Right ventricle myocardium superior (tissue), 1 donor: ENCODE measurements at regions of chr19 and their contacts with region 1.

Region 1: DNA sequence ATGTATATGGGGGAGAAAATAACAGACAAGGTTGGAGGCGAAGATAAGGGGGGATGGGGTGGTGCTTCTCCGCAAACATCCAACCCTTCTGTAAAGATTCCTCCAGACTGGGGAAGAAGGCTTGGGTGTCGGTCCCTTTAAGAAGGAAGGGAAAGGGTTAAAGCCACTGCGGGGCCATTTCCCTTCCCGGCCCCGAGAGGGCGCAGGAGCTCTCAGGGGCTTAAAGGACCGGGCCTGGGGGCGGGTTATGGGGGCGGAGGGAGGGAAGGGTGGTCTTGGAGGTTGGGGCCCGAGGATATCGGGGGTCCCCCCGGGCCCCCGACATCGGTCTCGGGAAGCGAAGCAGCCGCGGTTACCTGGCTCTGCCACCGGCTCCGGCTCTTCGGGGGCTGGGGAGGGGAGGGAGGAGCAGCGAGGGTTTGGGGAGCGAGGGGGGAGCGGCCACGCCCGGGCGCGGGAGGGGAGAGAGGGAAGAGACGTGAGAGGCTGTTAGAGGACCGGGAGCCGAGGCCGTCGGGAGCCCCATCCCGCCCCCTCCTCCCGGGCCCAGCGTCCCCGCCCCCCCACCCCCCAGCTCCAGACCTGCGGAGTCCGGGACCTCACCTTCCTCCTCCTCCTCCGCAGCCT is 2.8 kb downstream of the TNNT1 start:
- DNase-seq: no peak
- ATAC-seq: no peak

Region 2: GRCh38 chr19:55418185-55418584 is 272.0 kb after region 1 on chr19:
- intact Hi-C with region 1: loop called (anchors 5 kb)
- DNase-seq: no peak
- ATAC-seq: peak; percentile 80

Region 3: DNA sequence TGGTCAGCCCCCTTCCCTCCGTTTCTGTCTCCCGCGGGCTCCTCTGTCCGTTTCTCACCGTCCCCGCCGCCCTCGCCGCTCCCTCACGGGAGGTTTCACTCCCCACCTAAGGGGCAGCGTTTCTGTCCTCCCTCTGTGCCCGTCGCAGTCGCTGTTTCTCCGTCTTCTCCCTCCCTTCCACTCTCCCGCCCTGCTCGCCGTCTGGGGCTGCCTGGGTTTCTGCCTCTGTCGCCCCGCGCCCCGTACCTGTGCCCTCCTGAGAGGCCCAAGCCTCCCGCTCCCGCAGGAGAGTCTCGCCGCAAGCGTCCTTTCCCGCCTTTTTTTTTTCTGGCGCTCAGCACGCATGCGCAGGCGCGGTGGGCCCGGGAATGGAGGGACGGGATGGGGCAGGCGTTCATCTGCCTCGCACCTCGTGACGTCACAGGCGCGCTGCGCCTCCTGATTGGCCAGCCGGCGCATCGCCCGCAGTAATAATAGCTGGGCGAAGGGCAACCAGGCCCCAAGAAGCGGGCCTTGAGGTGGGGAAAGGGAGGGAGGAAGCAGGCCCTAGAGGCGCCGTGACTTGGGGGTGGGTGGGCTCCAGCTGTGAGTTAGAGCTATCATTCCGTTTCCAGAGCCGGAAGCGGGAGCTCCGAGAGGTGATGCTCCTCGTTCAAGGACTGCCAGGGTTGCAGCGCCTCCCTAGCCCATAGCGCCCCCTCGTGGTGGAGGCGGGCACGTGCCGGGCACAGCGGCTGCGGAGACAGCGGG is 357.5 kb after region 1 on chr19:
- intact Hi-C with region 1: loop called (anchors 10 kb)
- DNase-seq: peak; percentile 97
- ATAC-seq: peak; percentile 99

Region 4: GRCh38 chr19:55566823-55567222 is 420.6 kb after region 1 on chr19:
- intact Hi-C with region 1: no loop called
- DNase-seq: no peak
- ATAC-seq: no peak

Region 5: GRCh38 chr19:55632463-55632834 is 486.3 kb after region 1 on chr19:
- intact Hi-C with region 1: loop called (anchors 10 kb)
- DNase-seq: peak; percentile 42
- ATAC-seq: peak; percentile 70

Region 6: DNA sequence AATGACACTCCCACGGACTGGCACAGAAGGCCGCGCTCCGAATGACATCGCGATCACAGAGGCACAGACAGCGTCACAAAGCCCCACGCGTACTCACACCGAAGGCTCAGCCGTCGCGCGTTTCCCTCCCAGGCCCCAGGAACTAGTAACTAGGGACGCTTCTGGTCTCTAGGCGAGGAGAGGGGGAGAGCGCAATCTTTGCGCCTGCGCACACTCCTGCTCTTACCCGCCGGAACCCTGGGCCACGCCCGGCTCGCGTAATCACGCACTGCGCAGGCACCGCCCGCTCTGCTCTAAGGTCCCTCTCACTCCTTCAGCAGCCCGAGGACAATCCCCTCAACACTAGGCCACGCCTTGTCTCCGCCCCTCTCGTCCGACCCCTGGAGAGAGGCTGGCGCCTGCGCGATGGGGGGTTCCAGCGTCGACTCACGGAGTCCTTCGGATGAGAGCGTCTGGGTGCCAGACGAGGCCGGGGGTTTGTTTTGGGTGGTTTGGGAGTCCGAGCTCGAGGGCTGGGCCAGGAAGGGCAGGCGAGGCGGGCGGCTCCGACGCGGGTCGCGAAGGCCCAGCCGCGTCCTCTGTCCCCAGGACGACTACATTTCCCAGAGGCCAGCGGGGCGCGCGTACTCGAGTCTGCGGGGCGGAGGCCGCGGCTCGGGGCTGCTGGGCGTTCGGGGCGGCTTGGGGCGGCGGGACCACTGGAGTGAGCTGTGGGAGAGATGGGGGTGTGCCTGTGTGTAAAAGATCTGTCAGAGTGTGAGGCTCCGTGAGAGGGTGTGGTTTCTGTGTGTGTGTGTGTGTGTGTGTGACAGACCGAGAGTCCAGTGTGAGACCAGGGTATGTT is 1361.5 kb after region 1 on chr19 and contains the start of gene ZNF471:
- intact Hi-C with region 1: no loop called
- DNase-seq: peak; percentile 99
- ATAC-seq: peak; percentile 100
- total RNA-seq, gene ZNF471: 6.2 TPM